Caco-2 (cell line): ENCODE measurements at regions of chr10 and their contacts with region 1.

Region 1: DNA sequence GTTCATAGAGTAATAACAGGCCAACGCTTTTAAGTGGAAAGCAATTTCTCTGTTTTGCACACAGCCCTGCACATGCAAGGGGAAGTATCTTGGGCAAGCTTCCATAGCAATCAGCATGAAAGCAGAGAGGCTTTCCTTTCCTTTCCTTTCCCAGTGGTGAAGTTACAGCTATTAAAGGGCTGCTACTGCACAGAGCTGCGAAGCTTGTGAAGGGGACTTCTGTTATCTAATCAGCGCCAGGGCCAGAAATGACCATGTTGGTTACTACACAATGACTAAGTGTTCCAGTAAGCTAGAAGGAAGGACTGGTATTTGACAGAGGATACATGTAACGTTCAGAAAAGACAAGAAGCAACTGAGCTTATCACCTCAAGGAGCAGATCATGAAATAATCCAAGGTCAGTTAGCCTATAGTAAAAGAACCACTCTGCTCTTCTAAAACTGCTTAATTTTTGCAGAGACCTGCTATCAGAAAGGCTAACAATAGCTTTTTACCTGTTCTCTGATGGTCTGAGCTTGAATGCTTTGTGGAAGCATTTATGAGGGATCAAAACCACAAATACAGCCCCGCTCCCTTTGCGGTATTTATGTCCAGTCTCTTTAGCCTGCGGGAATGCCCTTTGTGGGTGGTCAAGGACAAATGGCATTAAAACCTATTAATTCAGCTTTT is 45.9 kb downstream of the SGMS1 start:
- DNase-seq: peak; percentile 55 to 76
- H3K4me3 ChIP-seq: no peak overlapping the region
- H3K4me3 Mint-ChIP-seq: peak overlapping the region; percentile 65
- H3K27ac Mint-ChIP-seq: peak overlapping the region; percentile 82
- H3K4me1 ChIP-seq: peaks cover 60% of the 10 kb centered on the region
- H3K4me1 Mint-ChIP-seq: peaks cover 72% of the 10 kb centered on the region
- H3K27me3 ChIP-seq: no peaks in the 10 kb centered on the region
- H3K27me3 Mint-ChIP-seq: no peaks in the 10 kb centered on the region
- CTCF ChIP-seq: no peak

Region 2: DNA sequence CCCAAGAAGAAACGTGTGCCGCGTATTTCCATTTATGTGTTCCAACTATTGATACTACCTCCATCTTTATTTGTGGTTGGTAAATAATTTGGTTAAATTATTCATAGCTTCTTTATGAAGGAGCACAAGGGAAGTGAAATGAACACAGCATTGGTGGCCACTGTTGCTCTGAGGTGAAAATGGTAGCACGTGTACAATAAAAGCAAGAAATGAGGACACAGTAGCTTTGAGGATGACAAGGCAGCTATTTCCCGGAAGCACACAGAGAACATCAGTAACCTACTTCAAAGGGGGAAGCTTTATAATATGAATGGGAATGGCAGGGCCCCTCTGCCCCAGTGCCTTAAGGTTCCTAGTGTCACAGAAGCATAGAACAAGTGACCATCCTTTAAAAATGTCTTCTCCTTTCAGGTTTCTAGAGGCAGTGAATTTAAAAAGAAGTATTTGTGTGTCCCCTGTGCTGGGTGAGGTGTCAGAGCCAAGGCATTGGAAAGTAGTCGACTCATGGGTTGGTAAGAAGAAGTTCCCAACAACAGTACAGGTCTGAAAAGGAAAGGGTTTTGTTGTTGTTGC is 32.9 kb before region 1 on chr10:
- CTCF ChIA-PET with region 1: interaction called, 3 read pairs
- POLR2A ChIA-PET with region 1: no interaction called
- intact Hi-C with region 1: loop called (anchors 1 kb)
- DNase-seq: no peak
- H3K4me3 ChIP-seq: no peak overlapping the region
- H3K4me3 Mint-ChIP-seq: peak overlapping the region; percentile 49
- H3K27ac Mint-ChIP-seq: peak overlapping the region; percentile 91
- H3K4me1 ChIP-seq: peaks cover 37% of the 10 kb centered on the region
- H3K4me1 Mint-ChIP-seq: peaks cover 28% of the 10 kb centered on the region
- H3K27me3 ChIP-seq: no peaks in the 10 kb centered on the region
- H3K27me3 Mint-ChIP-seq: no peaks in the 10 kb centered on the region
- CTCF ChIP-seq: no peak

Region 3: GRCh38 chr10:50605269-50606263 is 27.8 kb after region 1 on chr10:
- CTCF ChIA-PET with region 1: interaction called, 3 read pairs
- POLR2A ChIA-PET with region 1: interaction called, 8 read pairs
- intact Hi-C with region 1: loop called (anchors 1 kb)
- DNase-seq: peak; percentile 62 to 73
- H3K4me3 ChIP-seq: no peak overlapping the region
- H3K4me3 Mint-ChIP-seq: peak overlapping the region; percentile 42
- H3K27ac Mint-ChIP-seq: peak overlapping the region; percentile 66
- H3K4me1 ChIP-seq: peaks cover 55% of the 10 kb centered on the region
- H3K4me1 Mint-ChIP-seq: peaks cover 57% of the 10 kb centered on the region
- H3K27me3 ChIP-seq: no peaks in the 10 kb centered on the region
- H3K27me3 Mint-ChIP-seq: no peaks in the 10 kb centered on the region
- CTCF ChIP-seq: no peak